Activated CD4-positive, alpha-beta T cell treated with anti-CD3 and anti-CD28 coated beads for 36 hours (primary cell): ENCODE measurements at regions of chr6 and their contacts with region 1.

Region 1: GRCh38 chr6:158786645-158787304 is 32.4 kb downstream of the EZR start:
- DNase-seq: no peak
- ATAC-seq: no peak
- H3K4me3 Mint-ChIP-seq: no peak overlapping the region
- H3K27ac Mint-ChIP-seq: no peak overlapping the region
- H3K4me1 Mint-ChIP-seq: peaks cover 39% of the 10 kb centered on the region
- H3K27me3 Mint-ChIP-seq: no peaks in the 10 kb centered on the region

Region 2: DNA sequence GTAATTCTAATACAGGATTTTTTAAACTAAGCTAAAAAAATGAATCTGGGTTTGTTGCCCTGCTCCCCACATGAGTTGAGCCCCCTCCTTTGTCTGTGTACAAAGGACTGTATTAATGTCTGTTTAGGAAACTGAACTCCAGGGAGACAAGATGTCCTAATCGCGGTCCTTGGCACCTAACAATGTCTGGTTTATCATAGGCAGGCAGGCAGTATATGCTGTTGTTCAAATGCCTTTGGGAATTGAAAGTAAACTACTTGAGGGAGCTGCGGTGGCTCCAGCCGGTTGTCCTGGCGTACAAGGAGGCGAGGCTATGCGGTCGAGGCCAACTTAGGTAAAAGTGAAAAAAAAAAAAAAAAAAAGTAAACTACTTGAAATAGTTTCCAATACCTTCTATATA is 376.0 kb before region 1 on chr6:
- CTCF ChIA-PET with region 1: no interaction called
- POLR2A ChIA-PET with region 1: interaction called, 11 read pairs
- intact Hi-C with region 1: no loop called
- DNase-seq: no peak
- ATAC-seq: no peak
- H3K4me3 Mint-ChIP-seq: no peak overlapping the region
- H3K27ac Mint-ChIP-seq: no peak overlapping the region
- H3K4me1 Mint-ChIP-seq: peaks cover 2% of the 10 kb centered on the region
- H3K27me3 Mint-ChIP-seq: no peaks in the 10 kb centered on the region

Region 3: GRCh38 chr6:158660333-158660754 is 126.4 kb before region 1 on chr6:
- CTCF ChIA-PET with region 1: no interaction called
- POLR2A ChIA-PET with region 1: no interaction called
- intact Hi-C with region 1: no loop called
- DNase-seq: peak; percentile 61
- ATAC-seq: peak; percentile 65
- H3K4me3 Mint-ChIP-seq: no peak overlapping the region
- H3K27ac Mint-ChIP-seq: no peak overlapping the region
- H3K4me1 Mint-ChIP-seq: peaks cover 53% of the 10 kb centered on the region
- H3K27me3 Mint-ChIP-seq: no peaks in the 10 kb centered on the region